ENCODE measurements at regions of chr11 and their contacts with region 1.

Region 1: DNA sequence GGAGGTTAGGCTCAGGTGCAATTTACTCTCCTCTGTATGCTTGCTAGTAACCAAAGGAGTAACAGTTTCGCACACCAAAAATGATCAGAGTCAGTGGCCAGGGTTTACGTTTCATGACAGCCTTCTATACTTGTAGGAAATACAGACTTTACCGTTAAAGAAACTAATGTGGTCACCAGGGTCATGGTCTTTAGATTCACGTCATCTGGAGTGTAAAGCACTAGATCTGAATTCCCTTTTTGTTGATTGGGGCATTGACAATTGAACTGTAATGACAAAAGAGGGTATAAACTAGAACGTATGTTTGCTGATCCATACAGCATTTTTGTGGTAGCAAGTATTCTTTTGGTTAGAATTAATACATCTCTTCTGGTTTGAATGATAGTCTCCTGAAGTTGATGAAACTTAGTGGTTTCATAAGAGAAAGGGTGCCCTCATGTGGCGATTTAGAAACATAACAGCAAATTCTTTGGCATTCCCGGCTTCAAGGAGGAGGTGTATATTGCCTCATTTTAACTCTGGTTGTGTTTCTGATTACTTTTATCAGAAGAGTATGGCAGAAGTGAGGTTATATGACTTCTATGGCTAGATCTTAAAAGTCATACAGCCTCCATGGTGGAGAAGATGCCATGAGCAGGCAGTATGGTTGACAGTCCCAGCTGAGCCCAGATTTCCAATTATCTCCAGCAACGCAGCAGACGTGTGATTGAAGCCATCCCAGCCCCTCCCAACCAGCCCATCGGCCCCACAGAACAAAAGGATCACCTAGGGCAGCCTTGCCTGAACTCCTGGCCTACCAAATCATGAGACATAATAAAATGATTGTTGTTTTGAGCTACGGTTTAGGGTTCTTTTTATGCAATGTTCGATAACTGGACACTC is 35.1 kb downstream of the MMP7 start:
- DNase-seq: peak; percentile 53
- H3K4me3 Mint-ChIP-seq: no peak overlapping the region
- H3K27ac Mint-ChIP-seq: no peak overlapping the region
- H3K4me1 Mint-ChIP-seq: peaks cover 25% of the 10 kb centered on the region
- H3K27me3 Mint-ChIP-seq: no peaks in the 10 kb centered on the region

Region 2: GRCh38 chr11:102317099-102317767 is 178.2 kb before region 1 on chr11 and contains the start of gene BIRC3:
- CTCF ChIA-PET with region 1: interaction called, 6 read pairs
- intact Hi-C with region 1: loop called (anchors 1 kb)
- DNase-seq: peak; percentile 97
- H3K4me3 Mint-ChIP-seq: peak within 1 kb of the TSS; percentile 96
- H3K27ac Mint-ChIP-seq: peak within 1 kb of the TSS; percentile 98
- H3K4me1 Mint-ChIP-seq: peaks cover 66% of the 10 kb centered on the region
- H3K27me3 Mint-ChIP-seq: no peaks in the 10 kb centered on the region
- total RNA-seq, gene BIRC3: 100 to 105 TPM

Region 3: GRCh38 chr11:102367364-102367763 is 128.0 kb before region 1 on chr11:
- CTCF ChIA-PET with region 1: interaction called, 6 read pairs
- intact Hi-C with region 1: loop called (anchors 1 kb)
- DNase-seq: no peak
- H3K4me3 Mint-ChIP-seq: no peak overlapping the region
- H3K27ac Mint-ChIP-seq: peak overlapping the region; percentile 1
- H3K4me1 Mint-ChIP-seq: peaks cover 34% of the 10 kb centered on the region
- H3K27me3 Mint-ChIP-seq: no peaks in the 10 kb centered on the region

Region 4: DNA sequence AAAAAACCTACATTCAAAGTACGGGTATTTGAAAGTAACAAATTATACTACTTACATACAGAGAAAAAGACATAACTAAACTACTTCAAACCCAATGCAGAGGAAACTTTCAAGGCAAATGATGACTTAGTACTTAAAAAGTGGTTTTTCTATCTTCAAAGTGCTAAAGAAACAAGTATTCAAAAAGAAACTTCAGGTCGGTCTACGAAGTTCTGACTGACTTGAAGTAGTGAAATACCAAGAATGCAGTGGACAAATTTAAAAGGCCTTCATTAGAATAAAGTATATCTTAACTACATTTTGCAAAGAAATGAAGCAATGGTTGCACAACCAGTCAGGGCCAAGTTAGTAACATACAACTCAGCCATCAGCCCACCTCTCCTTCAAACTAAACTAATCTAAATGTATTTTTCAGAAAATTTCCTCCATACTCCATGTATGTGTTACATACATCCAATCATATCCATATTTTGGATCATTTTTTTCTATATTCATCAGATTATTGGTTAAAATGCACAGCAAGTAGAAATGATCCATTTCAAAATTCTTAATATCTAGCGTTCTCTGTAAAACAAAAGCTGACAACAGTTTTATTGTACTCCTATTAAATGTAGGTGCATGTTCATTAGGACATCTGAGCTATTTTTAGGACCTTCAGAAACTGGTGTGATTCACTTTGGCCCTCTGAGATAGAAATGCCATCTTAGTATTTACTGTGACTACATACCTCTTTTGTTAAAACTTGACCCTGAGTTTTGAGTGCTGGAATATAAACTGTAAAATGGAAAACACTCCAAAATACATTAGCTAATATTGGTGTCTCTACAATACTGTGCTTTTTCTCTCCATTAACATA is 98.5 kb before region 1 on chr11:
- CTCF ChIA-PET with region 1: interaction called, 34 read pairs
- intact Hi-C with region 1: loop called (anchors 1 kb)
- DNase-seq: no peak
- H3K4me3 Mint-ChIP-seq: no peak overlapping the region
- H3K27ac Mint-ChIP-seq: peak overlapping the region; percentile 63
- H3K4me1 Mint-ChIP-seq: peaks cover 48% of the 10 kb centered on the region
- H3K27me3 Mint-ChIP-seq: no peaks in the 10 kb centered on the region

Region 5: DNA sequence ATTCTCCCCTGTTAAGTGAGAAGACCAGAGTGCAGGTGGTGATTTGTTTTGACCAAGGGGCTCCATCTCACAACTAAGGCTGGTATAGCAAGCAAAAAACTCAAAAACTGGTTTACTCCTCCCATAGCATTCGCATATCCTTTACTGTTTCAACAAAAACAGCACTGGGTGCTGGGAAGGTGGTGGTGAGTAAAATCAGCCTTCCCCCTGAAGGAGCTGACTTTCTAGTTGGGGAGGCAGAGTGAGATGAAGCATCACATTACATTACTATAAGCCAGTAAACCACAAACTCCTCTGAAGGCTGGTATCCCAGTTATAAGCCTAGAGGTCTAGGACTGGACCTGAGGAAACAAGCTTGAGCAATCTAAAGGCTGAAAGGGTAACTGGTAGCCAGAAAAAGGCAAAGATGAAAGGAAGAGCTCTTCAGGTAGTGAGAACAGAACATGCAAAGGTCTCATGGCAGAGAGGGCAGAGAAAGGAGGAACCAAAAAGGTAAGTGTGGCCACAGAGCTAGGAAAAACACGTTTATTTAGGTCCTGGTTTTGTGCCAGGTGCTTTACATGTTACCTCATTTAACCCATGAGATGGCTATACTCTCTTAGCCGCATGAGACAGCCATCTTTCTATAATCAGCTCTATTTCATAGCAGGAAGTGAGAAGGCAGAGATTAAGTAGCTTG is 65.1 kb before region 1 on chr11:
- CTCF ChIA-PET with region 1: no interaction called
- intact Hi-C with region 1: loop called (anchors 1 kb)
- DNase-seq: peak; percentile 86
- H3K4me3 Mint-ChIP-seq: peak overlapping the region; percentile 44
- H3K27ac Mint-ChIP-seq: peak overlapping the region; percentile 95
- H3K4me1 Mint-ChIP-seq: peaks cover 75% of the 10 kb centered on the region
- H3K27me3 Mint-ChIP-seq: no peaks in the 10 kb centered on the region

Region 6: DNA sequence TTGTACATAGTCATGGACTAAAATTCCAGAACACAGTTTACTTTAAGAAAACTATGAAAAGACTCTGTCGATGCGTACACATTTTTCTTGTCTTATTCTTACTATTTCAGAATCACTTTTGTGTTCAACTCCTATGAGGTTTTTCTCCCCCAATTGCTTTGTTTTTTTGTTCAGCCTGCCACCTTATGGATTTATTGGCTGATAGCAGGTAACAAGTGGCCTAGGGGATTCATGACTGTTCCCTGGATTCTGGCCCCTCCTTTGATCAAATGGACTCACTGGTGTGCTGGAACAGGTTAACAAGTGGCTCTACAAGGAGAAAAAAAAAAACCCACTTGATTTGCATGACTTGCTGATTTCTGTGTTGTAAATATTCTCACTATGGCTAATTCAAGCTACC is 119.1 kb after region 1 on chr11:
- CTCF ChIA-PET with region 1: interaction called, 52 read pairs
- intact Hi-C with region 1: loop called (anchors 1 kb)
- DNase-seq: no peak
- H3K4me3 Mint-ChIP-seq: no peak overlapping the region
- H3K27ac Mint-ChIP-seq: no peak overlapping the region
- H3K4me1 Mint-ChIP-seq: peaks cover 13% of the 10 kb centered on the region
- H3K27me3 Mint-ChIP-seq: no peaks in the 10 kb centered on the region

Measured in activated naive CD4-positive, alpha-beta T cell treated with anti-CD3 and anti-CD28 coated beads for 36 hours (primary cell).